ENCODE measurements at regions of chr19 and their contacts with region 1.

Region 1: GRCh38 chr19:48637170-48637947 is at the start of gene DBP:
- DNase-seq: peak; percentile 97
- H3K4me3 ChIP-seq: peak within 1 kb of the TSS; percentile 38 to 70 (median 51)
- H3K27ac ChIP-seq: peak within 1 kb of the TSS; percentile 45
- H3K4me1 ChIP-seq: peaks cover 45% of the 10 kb centered on the region
- H3K27me3 ChIP-seq: no peaks in the 10 kb centered on the region
- CTCF ChIP-seq: no peak
- total RNA-seq, gene DBP: 0.73 to 2.2 TPM

Region 2: DNA sequence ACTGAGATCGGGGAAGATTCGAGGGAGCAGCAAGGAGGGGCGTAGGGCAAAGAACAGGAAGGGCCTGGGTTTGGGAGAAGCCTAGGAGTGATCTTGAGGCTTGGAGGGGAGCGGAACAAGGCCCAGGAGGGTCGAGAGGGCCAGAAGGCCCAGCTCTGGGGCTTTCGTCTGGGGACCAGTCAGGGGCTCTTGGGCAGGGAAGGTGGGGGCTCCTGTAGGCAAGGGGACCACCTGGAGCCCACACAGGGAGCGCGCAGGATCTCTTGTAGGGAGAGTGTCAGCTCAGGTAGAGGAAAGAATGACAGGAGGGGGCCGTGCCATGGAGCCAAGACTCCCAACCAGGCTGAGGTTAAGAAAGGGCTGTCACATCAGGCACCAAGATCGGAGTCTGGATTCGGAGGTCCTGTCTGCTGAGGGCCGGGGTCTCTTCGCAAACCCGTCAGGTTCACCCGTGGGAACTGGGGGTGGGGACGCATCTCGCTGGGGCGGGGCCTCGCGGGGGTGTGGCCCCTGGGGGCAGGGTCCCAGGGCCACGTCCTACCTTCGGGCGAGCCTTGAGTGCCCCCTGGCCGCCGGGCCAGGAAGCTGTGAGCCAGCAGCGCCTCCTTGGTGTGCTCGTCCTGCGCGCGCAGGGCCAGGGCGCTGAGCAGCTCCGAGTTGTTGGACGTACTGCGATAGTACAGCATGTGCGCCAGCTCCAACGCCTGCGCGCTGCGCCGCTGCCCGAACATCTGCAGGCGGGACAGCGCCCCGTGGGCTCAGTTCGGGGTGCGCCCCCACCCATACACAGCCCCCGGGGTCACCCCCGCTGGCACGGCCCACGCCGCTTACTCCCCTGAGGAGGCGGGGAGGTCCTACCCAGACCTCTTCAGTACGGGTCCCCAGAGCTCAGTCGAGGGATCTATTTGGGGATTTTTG is 303.6 kb before region 1 on chr19:
- CTCF ChIA-PET with region 1: no interaction called
- dilution Hi-C with region 1: loop called (anchors 5 kb)
- in situ Hi-C with region 1: no loop called
- intact Hi-C with region 1: no loop called
- DNase-seq: peak; percentile 87
- H3K4me3 ChIP-seq: peak overlapping the region; percentile 15 to 48 (median 44)
- H3K27ac ChIP-seq: peak overlapping the region; percentile 45
- H3K4me1 ChIP-seq: peaks cover 35% of the 10 kb centered on the region
- H3K27me3 ChIP-seq: no peaks in the 10 kb centered on the region
- CTCF ChIP-seq: peak; percentile 54 to 89

Region 3: DNA sequence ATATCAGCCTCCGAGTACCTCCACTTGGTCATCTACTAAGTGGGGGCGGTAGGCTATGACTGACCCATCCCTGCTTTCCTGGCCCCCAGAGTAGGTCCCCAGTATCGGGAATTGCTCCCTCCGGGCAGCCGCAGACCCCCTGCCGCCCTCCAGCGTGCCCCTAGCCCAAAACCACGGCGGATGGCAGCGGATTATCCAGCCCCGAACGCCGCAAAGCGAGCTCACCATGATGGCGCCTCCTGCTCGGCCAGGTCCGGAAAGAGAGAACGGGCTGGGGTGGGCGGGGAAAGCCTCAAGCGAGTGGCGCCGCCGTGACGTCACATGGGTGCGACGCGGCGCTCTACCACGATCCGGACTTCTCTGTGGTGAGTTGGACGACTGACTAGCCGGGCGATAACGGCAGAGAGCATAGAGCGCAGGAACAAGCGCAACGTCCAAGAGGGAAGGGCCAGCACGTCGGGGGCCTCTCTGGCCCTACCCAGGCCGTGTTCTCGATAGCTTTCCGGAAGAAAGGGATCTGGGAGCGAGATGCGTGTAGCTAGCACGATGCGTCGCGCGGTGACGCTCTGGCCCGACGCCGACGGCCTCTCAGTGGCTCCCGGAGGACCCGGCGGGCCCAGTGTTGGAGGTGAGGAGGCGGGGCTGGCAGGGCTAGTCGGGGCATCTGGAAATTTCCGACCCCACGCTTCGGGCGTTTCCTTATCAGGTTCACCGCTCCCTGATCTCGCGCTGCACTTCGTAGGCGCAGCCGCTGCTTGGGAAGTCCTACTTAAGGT is 18.3 kb before region 1 on chr19 and contains the starts of genes RPL18 and SPHK2:
- CTCF ChIA-PET with region 1: no interaction called
- dilution Hi-C with region 1: no loop called
- in situ Hi-C with region 1: no loop called
- intact Hi-C with region 1: loop called (anchors 1 kb)
- DNase-seq: peak; percentile 100
- H3K4me3 ChIP-seq: peak within 1 kb of the TSS; percentile 92 to 94 (median 94)
- H3K27ac ChIP-seq: peak within 1 kb of the TSS; percentile 88
- H3K4me1 ChIP-seq: peaks cover 48% of the 10 kb centered on the region
- H3K27me3 ChIP-seq: no peaks in the 10 kb centered on the region
- CTCF ChIP-seq: no peak
- total RNA-seq, gene RPL18: 1,261 to 1,652 TPM
- total RNA-seq, gene SPHK2: 4.0 to 15.7 TPM

Region 4: DNA sequence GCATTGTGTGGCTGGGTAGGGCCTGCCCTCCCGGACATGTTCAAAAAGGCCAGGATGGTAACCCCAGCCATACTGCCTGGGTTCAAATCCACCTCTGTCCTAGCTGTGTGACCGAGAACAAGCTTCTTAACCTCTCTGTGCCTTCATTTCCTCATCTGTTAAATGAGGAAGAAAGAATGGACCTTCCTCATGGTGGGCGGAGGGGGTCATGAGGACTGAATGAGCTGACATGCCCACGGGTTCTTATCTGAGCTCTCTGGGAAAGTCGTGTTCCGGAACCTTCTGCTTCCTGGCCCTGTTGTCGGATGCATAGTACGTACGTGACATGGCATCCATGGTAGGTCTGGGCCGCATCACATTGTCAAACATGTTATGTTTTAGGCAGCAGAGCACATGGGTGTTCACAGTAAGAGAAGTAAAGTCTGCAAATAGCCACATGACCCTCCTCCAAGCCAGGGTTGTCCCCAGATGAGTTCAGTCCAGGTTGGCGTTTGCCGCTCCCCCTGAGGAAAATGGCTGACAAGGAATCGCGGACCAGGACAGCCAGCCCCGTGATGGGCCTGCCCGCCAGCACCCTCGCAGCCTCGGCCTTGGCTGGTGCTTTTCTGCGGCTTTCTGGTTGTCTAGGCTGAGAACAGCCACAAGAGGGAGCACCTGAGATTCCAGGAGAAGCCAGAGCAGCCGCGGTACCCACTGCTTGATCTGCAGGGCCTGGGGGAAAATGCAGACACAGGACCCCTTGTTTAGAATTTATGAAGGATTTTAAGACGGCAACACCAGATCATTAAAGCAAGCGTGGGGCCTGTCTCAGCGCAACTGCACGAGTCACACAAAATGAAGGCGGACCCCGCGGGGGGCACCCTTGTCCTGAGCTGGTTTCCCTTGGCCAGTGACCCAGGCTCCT is 37.8 kb after region 1 on chr19:
- CTCF ChIA-PET with region 1: no interaction called
- dilution Hi-C with region 1: loop called (anchors 5 kb)
- in situ Hi-C with region 1: no loop called
- intact Hi-C with region 1: no loop called
- DNase-seq: peak; percentile 70
- H3K4me3 ChIP-seq: no peak overlapping the region
- H3K27ac ChIP-seq: no peak overlapping the region
- H3K4me1 ChIP-seq: peaks cover 4% of the 10 kb centered on the region
- H3K27me3 ChIP-seq: no peaks in the 10 kb centered on the region
- CTCF ChIP-seq: peak; percentile 79 to 85

Region 5: GRCh38 chr19:48720613-48721296 is 83.4 kb after region 1 on chr19:
- CTCF ChIA-PET with region 1: no interaction called
- dilution Hi-C with region 1: loop called (anchors 5 kb)
- in situ Hi-C with region 1: no loop called
- intact Hi-C with region 1: no loop called
- DNase-seq: peak; percentile 98
- H3K4me3 ChIP-seq: peak overlapping the region; percentile 61 to 81 (median 61)
- H3K27ac ChIP-seq: peak overlapping the region; percentile 68
- H3K4me1 ChIP-seq: peaks cover 16% of the 10 kb centered on the region
- H3K27me3 ChIP-seq: no peaks in the 10 kb centered on the region
- CTCF ChIP-seq: no peak

Region 6: DNA sequence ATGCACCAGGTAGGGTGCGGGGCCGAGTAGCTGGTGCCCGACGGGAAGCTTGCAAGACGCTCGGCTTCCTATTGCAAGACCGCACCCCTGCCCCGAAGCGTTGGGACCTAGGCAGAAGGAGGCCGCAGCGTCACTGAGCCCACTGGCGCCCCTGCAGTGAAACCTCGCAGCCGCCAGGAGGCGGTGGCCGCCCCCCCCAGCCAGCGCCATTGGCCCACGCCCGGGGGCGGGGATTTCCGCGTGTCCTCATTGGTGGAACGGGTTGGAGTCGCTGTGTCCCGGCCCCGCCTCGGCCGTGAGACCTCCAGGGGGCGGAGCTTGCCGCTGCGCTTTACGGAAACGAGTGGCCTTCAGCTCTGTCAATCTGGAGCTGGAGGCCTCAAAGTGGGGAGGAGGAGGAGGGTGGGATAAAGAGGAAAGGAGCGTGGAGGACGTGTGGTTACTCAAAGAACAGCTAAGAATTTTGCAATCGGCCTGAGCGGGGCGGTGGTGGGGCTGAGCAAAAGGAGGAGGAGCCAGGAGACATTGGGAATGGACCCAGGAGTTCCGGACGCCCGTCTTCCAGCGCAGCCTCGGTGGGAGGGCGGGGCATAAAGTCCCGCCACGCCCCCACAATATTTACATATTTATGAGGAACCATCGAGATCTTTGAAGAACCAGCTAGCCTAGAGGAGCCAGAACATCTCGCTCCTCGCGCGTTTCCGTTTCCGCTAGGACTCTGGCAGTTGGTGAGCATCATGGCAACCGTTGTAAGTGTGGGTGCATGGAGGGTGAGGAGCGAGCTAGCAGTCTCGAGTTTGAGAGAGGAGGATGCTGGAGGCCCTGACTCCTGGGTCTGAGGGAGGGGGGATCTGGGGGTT is 356.0 kb after region 1 on chr19 and contains the starts of genes GYS1 and RUVBL2:
- CTCF ChIA-PET with region 1: no interaction called
- dilution Hi-C with region 1: no loop called
- in situ Hi-C with region 1: loop called in 1 of 2 experiments (anchors 25 kb)
- intact Hi-C with region 1: no loop called
- DNase-seq: peak; percentile 100
- H3K4me3 ChIP-seq: peak within 1 kb of the TSS; percentile 81 to 89 (median 86)
- H3K27ac ChIP-seq: peak within 1 kb of the TSS; percentile 86
- H3K4me1 ChIP-seq: peaks cover 28% of the 10 kb centered on the region
- H3K27me3 ChIP-seq: no peaks in the 10 kb centered on the region
- CTCF ChIP-seq: peak; percentile 83 to 92
- total RNA-seq, gene GYS1: 40.0 to 79.8 TPM
- total RNA-seq, gene RUVBL2: 108 to 148 TPM

Measured in mammary epithelial cell (primary cell).